Caco-2 (cell line): ENCODE measurements at regions of chr7 and their contacts with region 1.

Region 1: DNA sequence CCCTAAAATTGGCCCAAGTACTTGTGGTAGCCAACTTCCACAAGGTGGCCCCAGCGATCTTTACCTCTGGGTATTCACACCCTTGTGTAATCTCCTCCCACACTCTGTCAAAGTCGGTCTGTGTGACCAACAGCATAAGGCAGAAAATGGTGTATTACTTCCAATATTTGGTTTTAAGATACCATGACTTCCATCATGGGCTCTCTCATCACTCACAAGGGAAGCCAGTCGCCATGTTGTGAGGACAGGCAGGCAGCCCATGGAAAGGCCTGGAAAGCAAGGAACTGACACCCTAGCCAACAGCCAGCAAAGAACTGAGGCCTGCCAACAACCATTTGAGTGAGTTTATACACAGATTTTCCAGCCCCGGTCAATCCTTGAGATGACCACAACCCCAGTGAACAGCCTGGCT is 91.0 kb upstream of the KMT2E start:
- DNase-seq: peak; percentile 76 to 79
- H3K4me3 ChIP-seq: no peak overlapping the region
- H3K4me3 Mint-ChIP-seq: no peak overlapping the region
- H3K27ac Mint-ChIP-seq: no peak overlapping the region
- H3K4me1 ChIP-seq: peaks cover 23% of the 10 kb centered on the region
- H3K4me1 Mint-ChIP-seq: peaks cover 24% of the 10 kb centered on the region
- H3K27me3 ChIP-seq: no peaks in the 10 kb centered on the region
- H3K27me3 Mint-ChIP-seq: no peaks in the 10 kb centered on the region
- CTCF ChIP-seq: peak; percentile 73 to 91

Region 2: DNA sequence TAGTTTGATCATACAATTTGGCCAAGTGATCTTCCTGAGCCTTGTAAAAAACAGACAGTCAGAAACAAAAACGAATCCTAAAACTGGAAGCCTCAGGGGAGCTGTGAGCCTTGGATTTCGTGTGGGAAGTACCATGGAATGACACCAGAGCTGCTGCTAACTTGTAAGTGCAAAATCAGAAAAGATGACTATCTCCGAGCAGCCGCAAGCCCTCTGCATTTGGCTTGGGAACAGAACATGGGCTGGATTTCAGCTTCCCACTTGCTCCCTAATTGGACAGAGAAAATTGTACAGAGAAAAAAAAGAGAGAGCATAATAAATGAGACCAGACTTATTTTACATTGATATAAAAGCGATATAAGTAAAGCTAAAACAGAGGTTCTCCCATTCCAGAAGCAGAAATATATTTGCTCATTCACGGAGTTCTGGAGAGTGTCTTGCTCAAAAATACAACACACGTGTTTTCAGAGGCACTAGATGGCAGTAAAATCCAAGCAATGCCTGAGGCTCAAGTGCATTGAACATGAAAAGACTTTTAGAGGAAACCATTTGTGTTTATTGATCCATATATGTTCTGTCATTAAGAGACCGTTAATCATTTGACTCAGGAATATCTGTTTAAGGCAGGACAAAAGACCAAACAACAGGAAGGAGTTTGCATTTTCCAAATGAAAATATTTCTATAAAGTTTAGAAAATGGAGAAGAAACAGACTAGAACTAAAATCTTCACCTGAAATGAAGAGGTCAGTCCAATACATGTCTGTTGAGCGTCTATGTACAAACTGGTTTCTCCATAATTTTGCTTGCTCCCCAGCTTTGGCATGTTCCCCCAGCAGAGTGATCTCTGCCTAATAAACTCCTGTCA is 1398.7 kb before region 1 on chr7:
- CTCF ChIA-PET with region 1: no interaction called
- POLR2A ChIA-PET with region 1: no interaction called
- intact Hi-C with region 1: loop called (anchors 1 kb)
- DNase-seq: no peak
- H3K4me3 ChIP-seq: no peak overlapping the region
- H3K4me3 Mint-ChIP-seq: no peak overlapping the region
- H3K27ac Mint-ChIP-seq: peak overlapping the region; percentile 23
- H3K4me1 ChIP-seq: no peaks in the 10 kb centered on the region
- H3K4me1 Mint-ChIP-seq: peaks cover 12% of the 10 kb centered on the region
- H3K27me3 ChIP-seq: no peaks in the 10 kb centered on the region
- H3K27me3 Mint-ChIP-seq: no peaks in the 10 kb centered on the region
- CTCF ChIP-seq: peak; percentile 42 to 44

Region 3: GRCh38 chr7:104272767-104273384 is 650.1 kb before region 1 on chr7:
- CTCF ChIA-PET with region 1: no interaction called
- POLR2A ChIA-PET with region 1: no interaction called
- intact Hi-C with region 1: no loop called
- DNase-seq: peak in 1 of 2 experiments; percentile 24
- H3K4me3 ChIP-seq: no peak overlapping the region
- H3K4me3 Mint-ChIP-seq: no peak overlapping the region
- H3K27ac Mint-ChIP-seq: no peak overlapping the region
- H3K4me1 ChIP-seq: no peaks in the 10 kb centered on the region
- H3K4me1 Mint-ChIP-seq: no peaks in the 10 kb centered on the region
- H3K27me3 ChIP-seq: no peaks in the 10 kb centered on the region
- H3K27me3 Mint-ChIP-seq: peaks cover 15% of the 10 kb centered on the region
- CTCF ChIP-seq: peak; percentile 58 to 62

Region 4: DNA sequence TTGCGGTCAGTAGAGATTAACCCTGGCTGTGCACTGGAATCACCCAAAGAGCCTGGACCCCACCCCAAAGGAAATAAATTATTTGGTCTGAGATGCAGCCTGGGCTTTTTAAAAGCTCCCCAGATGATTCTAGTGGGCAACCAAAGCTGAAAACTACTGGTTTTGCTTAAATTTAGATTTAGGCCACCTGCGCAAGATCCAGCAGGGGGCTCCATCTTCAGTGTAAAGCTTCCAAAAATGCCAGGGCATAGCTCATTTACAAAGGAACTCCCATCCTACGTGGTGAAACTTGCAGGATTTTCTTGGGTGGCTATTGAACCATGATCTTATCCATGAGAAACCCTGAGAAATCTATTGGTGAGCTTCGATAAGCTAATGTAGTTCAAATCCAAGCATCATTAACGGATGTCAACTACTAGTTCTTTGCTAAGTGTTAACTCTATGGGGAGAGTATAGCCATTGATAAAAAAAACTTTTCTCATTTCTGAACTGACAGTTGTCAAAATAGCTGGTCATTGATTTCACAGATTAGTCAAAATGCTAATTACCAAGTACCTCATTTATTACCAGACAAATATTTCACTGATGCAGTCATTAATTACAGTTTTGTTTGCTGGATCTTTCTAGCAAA is 279.3 kb before region 1 on chr7:
- CTCF ChIA-PET with region 1: interaction called, 18 read pairs
- POLR2A ChIA-PET with region 1: no interaction called
- intact Hi-C with region 1: loop called (anchors 1 kb)
- DNase-seq: peak in 1 of 2 experiments; percentile 29
- H3K4me3 ChIP-seq: no peak overlapping the region
- H3K4me3 Mint-ChIP-seq: no peak overlapping the region
- H3K27ac Mint-ChIP-seq: no peak overlapping the region
- H3K4me1 ChIP-seq: no peaks in the 10 kb centered on the region
- H3K4me1 Mint-ChIP-seq: no peaks in the 10 kb centered on the region
- H3K27me3 ChIP-seq: no peaks in the 10 kb centered on the region
- H3K27me3 Mint-ChIP-seq: peaks cover 16% of the 10 kb centered on the region
- CTCF ChIP-seq: peak; percentile 72 to 74

Region 5: DNA sequence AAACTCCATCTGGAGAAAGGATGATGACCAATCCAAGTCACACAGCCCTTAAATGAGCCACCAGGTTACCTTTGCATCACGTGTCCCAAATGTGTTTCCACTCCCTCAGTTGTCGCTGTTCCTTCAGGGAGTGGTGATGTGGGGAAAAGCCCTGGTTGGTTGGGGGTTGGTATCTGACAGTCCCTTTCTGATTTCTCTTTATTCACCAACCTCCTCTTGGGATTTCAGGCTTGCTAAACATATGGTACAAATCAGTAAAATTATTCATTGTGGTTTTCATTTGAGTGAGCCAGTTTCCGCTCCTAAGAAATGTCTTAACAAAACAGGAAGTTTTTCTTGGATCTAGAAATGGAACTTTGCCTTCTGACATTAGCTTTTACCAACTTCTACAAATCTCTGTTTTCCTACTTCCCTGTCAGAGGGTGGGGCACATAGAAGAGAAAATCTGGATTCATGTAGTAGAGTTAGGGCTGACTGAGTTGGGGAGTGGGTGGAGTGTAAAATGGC is 50.9 kb after region 1 on chr7:
- CTCF ChIA-PET with region 1: no interaction called
- POLR2A ChIA-PET with region 1: no interaction called
- intact Hi-C with region 1: loop called (anchors 2 kb)
- DNase-seq: no peak
- H3K4me3 ChIP-seq: no peak overlapping the region
- H3K4me3 Mint-ChIP-seq: no peak overlapping the region
- H3K27ac Mint-ChIP-seq: no peak overlapping the region
- H3K4me1 ChIP-seq: peaks cover 5% of the 10 kb centered on the region
- H3K4me1 Mint-ChIP-seq: peaks cover 14% of the 10 kb centered on the region
- H3K27me3 ChIP-seq: no peaks in the 10 kb centered on the region
- H3K27me3 Mint-ChIP-seq: no peaks in the 10 kb centered on the region
- CTCF ChIP-seq: no peak

Region 6: GRCh38 chr7:105098863-105099515 is 176.0 kb after region 1 on chr7:
- CTCF ChIA-PET with region 1: no interaction called
- POLR2A ChIA-PET with region 1: no interaction called
- intact Hi-C with region 1: loop called (anchors 5 kb)
- DNase-seq: no peak
- H3K4me3 ChIP-seq: no peak overlapping the region
- H3K4me3 Mint-ChIP-seq: no peak overlapping the region
- H3K27ac Mint-ChIP-seq: no peak overlapping the region
- H3K4me1 ChIP-seq: no peaks in the 10 kb centered on the region
- H3K4me1 Mint-ChIP-seq: peaks cover 6% of the 10 kb centered on the region
- H3K27me3 ChIP-seq: no peaks in the 10 kb centered on the region
- H3K27me3 Mint-ChIP-seq: no peaks in the 10 kb centered on the region
- CTCF ChIP-seq: no peak

Region 7: GRCh38 chr7:105487579-105488571 is 564.9 kb after region 1 on chr7:
- CTCF ChIA-PET with region 1: no interaction called
- POLR2A ChIA-PET with region 1: no interaction called
- intact Hi-C with region 1: loop called (anchors 2 kb)
- DNase-seq: peak; percentile 48 to 54
- H3K4me3 ChIP-seq: no peak overlapping the region
- H3K4me3 Mint-ChIP-seq: no peak overlapping the region
- H3K27ac Mint-ChIP-seq: no peak overlapping the region
- H3K4me1 ChIP-seq: peaks cover 13% of the 10 kb centered on the region; the same call in 1 of the 2 replicates
- H3K4me1 Mint-ChIP-seq: peaks cover 6% of the 10 kb centered on the region
- H3K27me3 ChIP-seq: no peaks in the 10 kb centered on the region
- H3K27me3 Mint-ChIP-seq: no peaks in the 10 kb centered on the region
- CTCF ChIP-seq: peak; percentile 38 to 57